ENCODE measurements at regions of chr1 and their contacts with region 1.

Region 1: DNA sequence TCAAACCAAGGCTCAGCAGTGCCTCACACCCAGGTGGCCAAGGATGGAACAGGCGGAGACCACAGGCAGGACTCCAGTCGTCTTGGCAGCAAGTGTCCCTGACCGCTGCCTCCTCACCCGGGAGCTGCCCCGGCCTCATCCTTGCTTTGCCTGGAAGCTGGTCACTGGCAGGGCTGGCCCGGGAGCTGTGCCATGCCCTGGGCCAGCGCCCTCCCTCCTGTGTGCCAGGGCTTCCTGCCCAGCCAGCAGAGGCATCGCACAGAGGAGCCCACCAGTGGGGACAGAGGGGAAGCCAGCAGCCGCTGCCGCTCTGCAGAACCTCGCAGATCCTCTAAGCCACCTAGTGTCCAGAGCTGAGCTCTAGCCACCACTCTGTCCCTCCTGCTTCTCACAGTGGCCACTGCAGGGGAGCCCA is 7.8 kb downstream of the CASZ1 start:
- DNase-seq: peak; percentile 44 to 76 (median 70)
- ATAC-seq: peak; percentile 69
- H3K4me3 ChIP-seq: no peak overlapping the region
- H3K27ac ChIP-seq: no peak overlapping the region
- H3K4me1 ChIP-seq: peaks cover 33% of the 10 kb centered on the region
- H3K27me3 ChIP-seq: no peaks in the 10 kb centered on the region
- CTCF ChIP-seq: peak in 6 of 7 experiments; percentile 17 to 61 (median 50)
- POLR2A ChIP-seq: peak in 1 of 3 donors; percentile 14

Region 2: DNA sequence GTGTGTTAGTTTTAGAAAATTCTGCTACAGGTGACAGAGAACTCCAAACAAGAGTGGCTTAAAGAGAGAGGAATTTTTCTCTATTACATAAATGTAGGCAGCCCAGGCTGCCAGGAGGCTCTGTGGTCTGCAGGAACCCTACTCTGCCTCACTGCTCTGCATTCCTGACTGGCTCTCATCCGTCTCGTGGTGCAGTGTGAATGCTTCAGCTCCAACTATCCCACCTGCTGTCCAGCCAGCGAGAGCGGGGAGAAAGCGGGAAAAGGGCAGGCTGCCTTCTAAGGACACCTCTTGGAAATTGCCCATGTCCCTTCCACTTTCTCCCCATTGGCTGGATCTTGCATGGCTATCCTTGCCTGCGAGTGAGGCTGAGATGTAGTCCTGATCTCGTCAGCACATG is 182.5 kb before region 1 on chr1:
- intact Hi-C with region 1: no loop called
- DNase-seq: no peak
- ATAC-seq: no peak
- H3K4me3 ChIP-seq: no peak overlapping the region
- H3K27ac ChIP-seq: no peak overlapping the region
- H3K4me1 ChIP-seq: peaks cover 24% of the 10 kb centered on the region
- H3K27me3 ChIP-seq: no peaks in the 10 kb centered on the region
- CTCF ChIP-seq: no peak
- POLR2A ChIP-seq: no peak

Region 3: GRCh38 chr1:10694633-10695627 is 93.7 kb before region 1 on chr1:
- intact Hi-C with region 1: loop called (anchors 10 kb)
- DNase-seq: peak; percentile 90 to 94 (median 92)
- ATAC-seq: peak; percentile 83
- H3K4me3 ChIP-seq: no peak overlapping the region
- H3K27ac ChIP-seq: peak overlapping the region; percentile 79 to 92 (median 88)
- H3K4me1 ChIP-seq: peaks cover 69% of the 10 kb centered on the region
- H3K27me3 ChIP-seq: no peaks in the 10 kb centered on the region
- CTCF ChIP-seq: peak in 1 of 7 experiments; percentile 12
- POLR2A ChIP-seq: peak in 1 of 3 donors; percentile 13